ENCODE measurements at regions of chr5 and their contacts with region 1.

Region 1: GRCh38 chr5:143824851-143825720 is 13.1 kb downstream of the HMHB1 start:
- DNase-seq: peak; percentile 81
- ATAC-seq: peak; percentile 87
- H3K4me3 ChIP-seq: no peak overlapping the region
- H3K27ac ChIP-seq: no peak overlapping the region
- H3K4me1 ChIP-seq: peaks cover 26% of the 10 kb centered on the region
- H3K27me3 ChIP-seq: no peaks in the 10 kb centered on the region
- CTCF ChIP-seq: peak; percentile 91 to 93 (median 93); a peak in 5 of 6 replicates
- EP300 ChIP-seq: no peak
- POLR2A ChIP-seq: no peak
- RAD21 ChIP-seq: peak; percentile 100

Region 2: GRCh38 chr5:142922223-142922952 is 902.7 kb before region 1 on chr5:
- CTCF ChIA-PET with region 1: interaction called, 46 read pairs
- POLR2A ChIA-PET with region 1: no interaction called
- RAD21 ChIA-PET with region 1: interaction called, 30 read pairs
- SMC1A ChIA-PET with region 1: interaction called, 11 read pairs
- in situ Hi-C with region 1: loop called (anchors 5 kb)
- intact Hi-C with region 1: loop called (anchors 2 kb)
- DNase-seq: peak; percentile 21
- ATAC-seq: peak; percentile 92
- H3K4me3 ChIP-seq: no peak overlapping the region
- H3K27ac ChIP-seq: no peak overlapping the region
- H3K4me1 ChIP-seq: no peaks in the 10 kb centered on the region
- H3K27me3 ChIP-seq: no peaks in the 10 kb centered on the region
- CTCF ChIP-seq: peak; percentile 41 to 66 (median 48); a peak in 4 of 6 replicates
- EP300 ChIP-seq: no peak
- POLR2A ChIP-seq: no peak
- RAD21 ChIP-seq: peak; percentile 68

Region 3: DNA sequence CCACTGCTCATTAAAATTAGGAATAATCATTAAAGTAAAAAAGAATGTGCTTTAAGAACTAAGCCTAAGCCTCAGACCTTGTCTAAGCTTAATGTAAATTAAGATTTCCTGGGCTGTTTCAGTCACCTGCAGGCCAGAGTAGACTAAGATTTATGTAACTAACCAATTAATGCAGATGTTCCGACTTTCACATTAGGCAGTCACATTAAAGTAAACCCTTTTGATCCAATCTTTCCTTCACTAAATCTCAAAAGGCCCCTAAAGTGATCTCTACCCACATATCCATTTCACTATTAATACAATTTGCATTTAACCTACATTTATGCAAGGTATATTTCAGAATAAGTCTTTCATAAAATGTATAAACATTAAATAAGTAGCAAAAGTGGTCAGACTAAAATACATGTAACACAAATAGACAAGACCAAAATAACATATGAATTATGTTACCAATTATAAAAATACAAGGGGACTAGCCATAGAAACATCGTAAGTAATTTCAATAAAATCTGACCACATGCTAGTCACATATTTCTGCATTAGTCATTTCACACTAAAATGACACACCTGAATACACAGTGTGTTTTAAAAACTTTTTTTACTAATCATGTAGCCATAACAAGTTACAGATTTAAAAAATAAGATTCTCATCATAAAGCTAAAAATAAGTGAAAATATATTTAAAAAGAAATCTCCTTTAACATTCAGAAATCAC is 429.3 kb before region 1 on chr5:
- CTCF ChIA-PET with region 1: interaction called, 14 read pairs
- POLR2A ChIA-PET with region 1: interaction called, 4 read pairs
- RAD21 ChIA-PET with region 1: interaction called, 9 read pairs
- SMC1A ChIA-PET with region 1: interaction called, 6 read pairs
- in situ Hi-C with region 1: no loop called
- intact Hi-C with region 1: loop called (anchors 2 kb)
- DNase-seq: no peak
- ATAC-seq: peak; percentile 17
- H3K4me3 ChIP-seq: peak overlapping the region; percentile 83
- H3K27ac ChIP-seq: peak overlapping the region; percentile 93
- H3K4me1 ChIP-seq: no peaks in the 10 kb centered on the region
- H3K27me3 ChIP-seq: no peaks in the 10 kb centered on the region
- CTCF ChIP-seq: no peak
- EP300 ChIP-seq: peak; percentile 24 to 31; a peak in 1 of 4 replicates
- POLR2A ChIP-seq: no peak
- RAD21 ChIP-seq: no peak

Region 4: DNA sequence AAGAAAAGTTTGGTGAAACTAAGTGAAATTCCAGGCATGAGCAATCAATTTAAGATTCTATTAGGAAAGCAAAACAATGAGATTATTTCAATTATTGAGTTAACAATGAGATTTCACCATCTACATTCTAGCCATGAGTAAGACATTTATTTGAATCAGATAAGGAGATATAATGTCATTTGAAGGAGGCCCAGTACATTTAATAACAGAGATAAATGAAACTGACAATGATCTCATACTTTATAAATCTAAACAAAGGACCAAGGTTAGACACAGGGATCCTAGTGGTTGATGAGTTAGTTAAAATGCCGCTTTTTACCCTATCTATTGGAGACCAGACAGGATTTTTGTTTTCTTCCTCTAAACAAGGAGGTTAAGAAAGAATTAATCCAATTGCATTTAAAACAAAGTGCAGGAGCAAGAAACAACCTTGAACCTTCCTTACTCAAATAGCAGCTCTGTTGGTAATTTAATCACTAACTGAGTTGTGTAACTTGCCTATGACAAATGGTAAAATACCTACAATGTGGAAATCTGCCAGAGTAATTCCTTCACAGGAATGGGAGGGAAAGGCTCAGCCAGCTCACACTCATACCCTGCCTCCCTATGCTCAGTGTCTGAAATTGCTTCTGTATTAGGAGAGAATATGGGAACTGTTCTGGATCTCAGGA is 318.1 kb before region 1 on chr5:
- CTCF ChIA-PET with region 1: interaction called, 7 read pairs
- POLR2A ChIA-PET with region 1: no interaction called
- RAD21 ChIA-PET with region 1: interaction called, 3 read pairs
- SMC1A ChIA-PET with region 1: interaction called, 7 read pairs
- in situ Hi-C with region 1: no loop called
- intact Hi-C with region 1: loop called (anchors 5 kb)
- DNase-seq: no peak
- ATAC-seq: no peak
- H3K4me3 ChIP-seq: no peak overlapping the region
- H3K27ac ChIP-seq: no peak overlapping the region
- H3K4me1 ChIP-seq: peaks cover 14% of the 10 kb centered on the region
- H3K27me3 ChIP-seq: no peaks in the 10 kb centered on the region
- CTCF ChIP-seq: no peak
- EP300 ChIP-seq: no peak
- POLR2A ChIP-seq: no peak
- RAD21 ChIP-seq: no peak

Region 5: DNA sequence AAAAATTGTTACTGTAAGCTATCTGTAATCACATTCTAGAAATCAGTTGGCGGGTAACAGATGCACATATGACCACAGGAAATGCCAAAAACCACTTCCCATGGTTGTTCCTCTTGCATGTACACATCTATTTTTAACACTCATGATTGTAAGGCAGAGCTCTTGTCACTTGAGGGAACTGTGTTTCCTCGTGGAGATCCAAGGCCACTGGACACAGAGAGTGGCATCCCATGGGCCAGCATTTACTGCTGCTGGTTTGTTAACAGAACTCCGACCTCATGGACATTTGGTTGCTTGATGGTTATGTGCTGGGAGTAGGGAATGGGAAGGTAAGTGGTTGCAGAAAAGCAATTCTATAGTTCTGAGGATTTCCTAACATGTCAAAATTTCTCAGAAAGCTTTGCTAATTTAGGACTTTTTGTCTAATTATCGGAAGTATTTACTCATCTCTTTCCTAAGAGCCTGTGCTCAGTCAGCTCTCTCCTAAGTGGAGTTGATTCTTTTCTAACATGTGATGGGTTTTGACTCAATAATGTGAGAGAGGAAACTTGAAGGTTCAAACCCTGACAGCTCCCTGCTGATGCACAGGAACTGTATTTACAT is 219.6 kb before region 1 on chr5:
- CTCF ChIA-PET with region 1: interaction called, 4 read pairs
- POLR2A ChIA-PET with region 1: no interaction called
- RAD21 ChIA-PET with region 1: interaction called, 4 read pairs
- SMC1A ChIA-PET with region 1: interaction called, 3 read pairs
- in situ Hi-C with region 1: no loop called
- intact Hi-C with region 1: loop called (anchors 2 kb)
- DNase-seq: peak; percentile 60
- ATAC-seq: peak; percentile 68
- H3K4me3 ChIP-seq: no peak overlapping the region; the same call in 1 of the 2 replicates
- H3K27ac ChIP-seq: peak overlapping the region; percentile 69
- H3K4me1 ChIP-seq: peaks cover 22% of the 10 kb centered on the region
- H3K27me3 ChIP-seq: no peaks in the 10 kb centered on the region
- CTCF ChIP-seq: no peak
- EP300 ChIP-seq: peak in 1 of 2 experiments; percentile 40; a peak in 2 of 4 replicates
- POLR2A ChIP-seq: no peak
- RAD21 ChIP-seq: 0 out of 2 replicates have a peak, but pooled peaks have one; percentile 9

Region 6: GRCh38 chr5:143700994-143701393 is 124.1 kb before region 1 on chr5:
- CTCF ChIA-PET with region 1: interaction called, 15 read pairs
- POLR2A ChIA-PET with region 1: no interaction called
- RAD21 ChIA-PET with region 1: interaction called, 4 read pairs
- SMC1A ChIA-PET with region 1: interaction called, 11 read pairs
- in situ Hi-C with region 1: no loop called
- intact Hi-C with region 1: no loop called
- DNase-seq: no peak
- ATAC-seq: no peak
- H3K4me3 ChIP-seq: no peak overlapping the region
- H3K27ac ChIP-seq: no peak overlapping the region
- H3K4me1 ChIP-seq: no peaks in the 10 kb centered on the region
- H3K27me3 ChIP-seq: no peaks in the 10 kb centered on the region
- CTCF ChIP-seq: no peak
- EP300 ChIP-seq: no peak
- POLR2A ChIP-seq: no peak
- RAD21 ChIP-seq: no peak

Region 7: DNA sequence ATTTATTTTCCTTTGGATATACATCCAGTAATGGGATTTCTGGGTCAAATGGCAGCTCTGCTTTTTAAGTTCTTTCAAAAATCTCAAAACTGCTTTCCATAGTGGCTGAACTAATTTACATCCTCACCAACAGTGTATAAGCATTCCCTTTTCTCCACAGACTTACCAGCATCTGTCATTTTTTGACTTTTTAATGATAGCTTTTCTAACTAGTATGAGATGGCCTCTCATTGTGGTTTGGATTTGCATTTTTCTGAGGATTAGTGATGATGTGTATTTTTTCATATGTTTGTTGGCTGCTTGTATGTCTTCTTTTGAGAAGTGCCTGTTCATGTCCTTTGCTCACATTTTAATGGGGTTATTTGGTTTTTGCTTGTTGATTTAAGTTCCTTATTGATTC is 103.2 kb before region 1 on chr5:
- CTCF ChIA-PET with region 1: no interaction called
- POLR2A ChIA-PET with region 1: no interaction called
- RAD21 ChIA-PET with region 1: no interaction called
- SMC1A ChIA-PET with region 1: no interaction called
- in situ Hi-C with region 1: no loop called
- intact Hi-C with region 1: no loop called
- DNase-seq: no peak
- ATAC-seq: no peak
- H3K4me3 ChIP-seq: no peak overlapping the region
- H3K27ac ChIP-seq: no peak overlapping the region
- H3K4me1 ChIP-seq: no peaks in the 10 kb centered on the region
- H3K27me3 ChIP-seq: no peaks in the 10 kb centered on the region
- CTCF ChIP-seq: no peak
- EP300 ChIP-seq: no peak
- POLR2A ChIP-seq: no peak
- RAD21 ChIP-seq: no peak

Region 8: DNA sequence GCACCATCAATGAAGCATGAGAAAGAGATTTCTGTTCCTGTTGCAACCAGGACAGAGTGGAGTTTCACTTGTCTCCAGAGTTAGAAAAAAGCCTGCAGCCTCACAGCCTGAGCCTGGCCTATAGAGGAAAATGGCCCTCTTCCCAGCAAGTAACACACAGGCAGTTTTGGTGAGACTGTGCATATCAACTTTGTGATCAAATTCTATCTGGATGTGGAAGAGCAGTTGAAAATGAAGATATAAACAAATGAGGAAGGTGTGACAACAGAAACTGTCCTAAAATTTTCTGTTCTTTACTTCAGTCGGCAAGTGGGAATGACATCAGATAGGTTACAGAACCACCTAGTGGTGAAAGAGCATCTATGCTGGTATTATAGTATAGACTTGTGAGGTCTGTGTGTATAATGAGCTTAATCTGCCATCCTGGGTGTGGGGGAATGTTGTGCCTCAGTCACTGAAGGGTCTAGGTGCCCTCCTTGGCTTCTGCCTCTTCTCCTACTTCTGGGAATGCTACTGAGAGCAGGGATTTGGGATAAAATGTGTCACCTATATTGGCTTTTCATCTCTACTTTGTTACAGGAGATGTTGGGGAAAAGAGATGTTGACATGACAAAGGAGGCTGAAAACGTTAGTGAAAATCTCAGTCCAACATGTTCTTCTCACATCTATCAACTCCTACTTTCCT is 317.2 kb after region 1 on chr5:
- CTCF ChIA-PET with region 1: interaction called, 22 read pairs
- POLR2A ChIA-PET with region 1: no interaction called
- RAD21 ChIA-PET with region 1: interaction called, 5 read pairs
- SMC1A ChIA-PET with region 1: interaction called, 3 read pairs
- in situ Hi-C with region 1: no loop called
- intact Hi-C with region 1: no loop called
- DNase-seq: peak; percentile 25
- ATAC-seq: peak; percentile 99
- H3K4me3 ChIP-seq: no peak overlapping the region
- H3K27ac ChIP-seq: no peak overlapping the region
- H3K4me1 ChIP-seq: peaks cover 11% of the 10 kb centered on the region
- H3K27me3 ChIP-seq: no peaks in the 10 kb centered on the region; a peak in 1 of 4 replicates
- CTCF ChIP-seq: peak; percentile 64 to 71 (median 69)
- EP300 ChIP-seq: no peak
- POLR2A ChIP-seq: no peak
- RAD21 ChIP-seq: peak; percentile 83

Measured in GM12878 (cell line).